ENCODE measurements at regions of chr1 and their contacts with region 1.

Region 1: DNA sequence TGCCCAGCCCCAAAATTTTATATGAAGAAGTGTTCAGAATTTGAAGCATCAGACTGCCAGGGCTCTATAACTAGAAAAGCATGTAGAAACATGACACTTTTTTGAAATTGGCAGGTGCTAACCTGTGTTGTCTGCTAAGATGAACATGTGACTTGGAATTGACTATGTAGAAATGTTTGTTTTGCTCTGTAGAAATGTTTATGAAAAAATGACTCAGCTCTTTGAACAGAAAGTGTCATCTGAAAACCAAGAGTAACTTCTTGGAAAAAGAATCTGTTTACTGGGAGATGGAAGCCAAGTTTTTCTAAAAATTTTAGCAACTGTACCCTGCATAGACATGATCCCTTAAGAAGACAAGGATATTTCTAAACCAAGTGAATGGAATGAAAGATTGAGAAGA is 59.2 kb downstream of the LHX9 start:
- DNase-seq: no peak
- H3K4me3 Mint-ChIP-seq: no peak overlapping the region
- H3K27ac Mint-ChIP-seq: peak overlapping the region; percentile 12
- H3K4me1 Mint-ChIP-seq: peaks cover 14% of the 10 kb centered on the region
- H3K27me3 Mint-ChIP-seq: no peaks in the 10 kb centered on the region
- CTCF ChIP-seq: no peak

Region 2: DNA sequence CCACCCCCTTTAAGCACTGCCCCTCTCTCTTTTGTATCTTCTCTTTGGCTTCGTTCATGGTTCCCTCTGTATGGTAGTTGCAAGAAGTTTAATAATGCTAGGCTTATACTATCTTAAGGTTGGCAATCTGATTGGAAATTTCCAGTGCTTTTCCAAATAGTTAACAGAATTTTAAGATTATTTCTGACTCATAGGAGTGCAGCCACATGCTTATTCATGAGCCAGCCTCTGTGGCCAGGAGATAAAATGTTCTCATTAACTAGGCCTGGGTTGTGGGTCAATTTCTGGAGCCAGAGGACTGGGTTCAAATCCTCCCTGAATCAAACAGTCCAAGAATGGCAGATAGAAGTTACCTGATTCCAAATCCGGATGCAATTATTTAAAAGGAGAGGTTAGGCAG is 461.0 kb after region 1 on chr1:
- CTCF ChIA-PET with region 1: interaction called, 13 read pairs
- intact Hi-C with region 1: no loop called
- DNase-seq: no peak
- H3K4me3 Mint-ChIP-seq: no peak overlapping the region
- H3K27ac Mint-ChIP-seq: peak overlapping the region; percentile 22
- H3K4me1 Mint-ChIP-seq: peaks cover 33% of the 10 kb centered on the region
- H3K27me3 Mint-ChIP-seq: no peaks in the 10 kb centered on the region
- CTCF ChIP-seq: no peak